ENCODE measurements at regions of chr10 and their contacts with region 1.

Region 1: DNA sequence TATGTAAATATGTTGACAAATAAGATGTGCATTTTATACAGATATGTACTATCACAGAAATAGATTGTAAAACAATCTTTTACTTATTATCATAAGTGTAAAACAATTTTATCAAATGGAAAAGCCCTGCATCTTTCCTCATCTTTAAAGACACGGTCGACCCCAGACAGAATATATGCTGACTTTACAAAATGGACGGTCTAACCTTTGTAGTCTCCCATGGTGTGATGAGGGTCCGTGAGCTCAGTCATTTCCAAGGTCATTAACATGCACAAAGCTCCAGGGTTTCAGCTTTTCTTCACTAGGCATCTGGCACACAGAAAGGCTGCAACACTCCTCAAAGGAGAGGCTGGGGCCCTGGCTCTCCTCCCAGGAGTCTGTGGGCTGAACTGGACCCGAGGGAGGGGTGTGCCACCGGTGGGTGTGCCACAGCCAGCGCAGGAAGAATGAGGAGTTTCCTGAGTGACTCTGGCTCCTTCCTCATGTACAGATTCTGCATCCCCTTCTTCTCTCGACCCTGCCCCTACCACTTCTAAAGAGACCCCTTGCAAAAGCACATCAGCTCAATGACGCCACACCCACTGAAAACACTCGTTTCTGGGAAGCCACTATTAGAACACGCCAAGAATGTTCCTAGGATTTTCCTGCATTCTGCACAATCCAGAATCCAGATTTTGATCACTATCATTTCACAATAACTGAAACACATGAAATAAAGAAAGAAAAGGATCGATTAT is 26.2 kb upstream of the ABLIM1 start:
- DNase-seq: peak; percentile 80 to 91 (median 85)
- ATAC-seq: peak; percentile 81 to 89
- H3K4me3 ChIP-seq: peak overlapping the region; percentile 75
- H3K27ac ChIP-seq: peak overlapping the region; percentile 71
- H3K4me1 ChIP-seq: peaks cover 6% of the 10 kb centered on the region
- H3K27me3 ChIP-seq: no peaks in the 10 kb centered on the region

Region 2: GRCh38 chr10:114623661-114624294 is 60.5 kb before region 1 on chr10:
- intact Hi-C with region 1: loop called in 1 of 4 experiments (anchors 5 kb)
- DNase-seq: no peak
- ATAC-seq: peak; percentile 53 to 73
- H3K4me3 ChIP-seq: no peak overlapping the region
- H3K27ac ChIP-seq: peak overlapping the region; percentile 67
- H3K4me1 ChIP-seq: peaks cover 11% of the 10 kb centered on the region
- H3K27me3 ChIP-seq: no peaks in the 10 kb centered on the region

Region 3: DNA sequence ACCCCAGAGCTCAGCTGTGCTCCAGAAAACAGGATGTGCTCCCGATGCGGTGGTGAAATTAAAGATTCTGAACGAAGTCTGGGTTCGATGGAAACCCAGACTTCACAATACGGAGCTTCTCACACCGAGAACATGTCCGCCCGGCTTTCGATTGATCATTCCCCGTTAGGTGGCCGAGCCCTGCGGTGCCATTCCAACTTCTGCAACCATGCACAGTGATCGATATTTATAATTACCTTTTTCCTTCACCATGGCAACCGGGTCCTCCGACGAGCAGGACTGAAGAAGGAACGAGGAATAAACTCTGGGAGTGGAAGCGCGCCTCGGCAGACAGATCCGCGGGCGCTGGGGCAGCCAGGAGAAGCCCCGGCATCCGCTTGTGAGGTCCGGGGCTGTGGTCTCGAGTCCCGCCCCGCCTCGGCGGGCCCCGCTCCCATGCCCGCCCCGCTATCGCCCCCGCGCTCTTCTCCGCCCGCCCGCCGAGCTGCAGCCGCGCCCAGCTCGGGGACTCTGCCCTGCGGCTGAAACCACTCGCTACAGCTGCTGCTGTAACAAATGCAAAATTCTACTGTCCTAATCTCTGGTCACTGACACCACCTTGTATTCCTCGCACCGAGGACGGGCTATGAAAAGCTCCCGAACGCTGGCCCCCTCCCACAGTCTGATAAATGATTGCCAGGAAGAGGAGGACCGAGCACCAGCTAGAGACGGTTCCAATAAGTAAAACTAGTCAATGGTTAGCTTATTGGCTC is 52.4 kb before region 1 on chr10:
- intact Hi-C with region 1: loop called in 3 of 4 experiments (anchors 5 to 10 kb)
- DNase-seq: peak; percentile 59 to 84 (median 80)
- ATAC-seq: peak; percentile 64 to 67
- H3K4me3 ChIP-seq: peak overlapping the region; percentile 97
- H3K27ac ChIP-seq: peak overlapping the region; percentile 87
- H3K4me1 ChIP-seq: peaks cover 14% of the 10 kb centered on the region
- H3K27me3 ChIP-seq: no peaks in the 10 kb centered on the region

Region 4: DNA sequence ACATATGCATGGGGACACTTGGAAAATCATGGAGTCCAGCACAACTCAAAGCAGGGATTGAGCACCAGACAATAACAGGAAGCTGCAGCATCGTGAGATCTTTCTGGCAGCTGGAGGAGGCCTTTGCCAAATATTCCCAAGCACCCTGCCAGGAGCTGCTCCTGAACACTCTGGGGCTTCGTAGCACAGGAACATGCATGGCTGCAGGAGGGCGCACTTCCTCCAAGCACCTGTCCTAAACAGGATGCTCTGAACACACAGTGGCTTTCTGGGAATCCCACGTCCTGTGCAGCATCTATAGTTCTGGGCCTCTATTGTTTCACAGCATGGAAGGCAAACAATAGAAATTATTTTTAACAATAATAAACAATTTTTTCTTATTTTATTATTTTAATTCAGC is 30.3 kb before region 1 on chr10:
- intact Hi-C with region 1: loop called in 1 of 4 experiments (anchors 2 kb)
- DNase-seq: peak; percentile 28 to 71 (median 58)
- ATAC-seq: peak; percentile 24 to 39
- H3K4me3 ChIP-seq: no peak overlapping the region
- H3K27ac ChIP-seq: peak overlapping the region; percentile 6
- H3K4me1 ChIP-seq: peaks cover 22% of the 10 kb centered on the region
- H3K27me3 ChIP-seq: no peaks in the 10 kb centered on the region

Region 5: GRCh38 chr10:114801411-114801813 is 117.2 kb after region 1 on chr10:
- intact Hi-C with region 1: no loop called
- DNase-seq: no peak
- ATAC-seq: peak; percentile 62 to 78
- H3K4me3 ChIP-seq: no peak overlapping the region
- H3K27ac ChIP-seq: no peak overlapping the region
- H3K4me1 ChIP-seq: no peaks in the 10 kb centered on the region
- H3K27me3 ChIP-seq: no peaks in the 10 kb centered on the region

Region 6: DNA sequence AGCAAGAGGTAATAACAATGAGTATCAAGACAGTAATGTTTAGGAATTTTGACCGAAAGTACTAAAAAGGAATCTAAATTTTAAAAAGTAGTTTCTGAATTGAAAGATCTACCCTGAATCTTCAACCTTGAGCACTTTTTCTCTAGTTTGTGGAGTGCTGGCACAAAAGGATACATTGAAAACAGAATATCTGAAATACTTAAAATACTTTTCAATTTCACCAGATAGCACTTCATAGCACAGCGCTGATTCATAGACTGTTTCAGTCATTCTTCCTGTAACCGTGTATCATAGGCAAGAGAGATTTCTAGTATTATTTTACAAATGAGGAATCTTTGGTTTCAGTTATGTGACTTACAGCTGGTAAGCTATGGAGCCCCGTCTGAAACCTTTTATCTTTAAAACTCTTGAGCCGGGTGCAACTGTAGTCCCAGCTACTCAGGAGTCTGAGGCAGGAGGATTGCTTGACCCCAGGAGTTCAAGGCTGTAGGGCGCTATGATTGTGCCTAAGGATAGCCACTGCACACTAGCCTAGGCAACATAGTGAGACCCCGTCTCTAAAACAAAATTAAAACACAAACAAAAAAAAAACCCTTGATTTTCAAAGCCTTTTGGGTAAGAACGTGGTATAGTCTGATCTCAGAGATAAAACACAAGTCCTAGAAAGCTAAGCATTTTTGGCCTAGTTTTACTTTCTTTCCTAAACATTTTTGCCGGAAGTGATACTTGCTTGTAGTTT is 172.5 kb after region 1 on chr10:
- intact Hi-C with region 1: no loop called
- DNase-seq: no peak
- ATAC-seq: no peak
- H3K4me3 ChIP-seq: no peak overlapping the region
- H3K27ac ChIP-seq: no peak overlapping the region
- H3K4me1 ChIP-seq: peaks cover 1% of the 10 kb centered on the region
- H3K27me3 ChIP-seq: no peaks in the 10 kb centered on the region

Measured in right cardiac atrium (tissue), 5 donors.